Mammary epithelial cell (primary cell): ENCODE measurements at regions of chr2 and their contacts with region 1.

Region 1: GRCh38 chr2:218008060-218009040 is 5.6 kb upstream of the TNS1 start:
- DNase-seq: no peak
- H3K4me3 ChIP-seq: no peak overlapping the region
- H3K27ac ChIP-seq: no peak overlapping the region
- H3K4me1 ChIP-seq: peaks cover 11% of the 10 kb centered on the region
- H3K27me3 ChIP-seq: peaks cover 19% of the 10 kb centered on the region
- CTCF ChIP-seq: no peak

Region 2: GRCh38 chr2:217851191-217852020 is 156.9 kb before region 1 on chr2:
- CTCF ChIA-PET with region 1: no interaction called
- dilution Hi-C with region 1: no loop called
- in situ Hi-C with region 1: no loop called
- intact Hi-C with region 1: no loop called
- DNase-seq: peak; percentile 21
- H3K4me3 ChIP-seq: no peak overlapping the region
- H3K27ac ChIP-seq: no peak overlapping the region
- H3K4me1 ChIP-seq: peaks cover 26% of the 10 kb centered on the region
- H3K27me3 ChIP-seq: no peaks in the 10 kb centered on the region
- CTCF ChIP-seq: no peak

Region 3: GRCh38 chr2:218026676-218027425 is 18.5 kb after region 1 on chr2:
- CTCF ChIA-PET with region 1: no interaction called
- dilution Hi-C with region 1: no loop called
- in situ Hi-C with region 1: no loop called
- intact Hi-C with region 1: loop called (anchors 2 kb)
- DNase-seq: no peak
- H3K4me3 ChIP-seq: no peak overlapping the region
- H3K27ac ChIP-seq: no peak overlapping the region
- H3K4me1 ChIP-seq: peaks cover 5% of the 10 kb centered on the region
- H3K27me3 ChIP-seq: no peaks in the 10 kb centered on the region
- CTCF ChIP-seq: no peak

Region 4: GRCh38 chr2:218093879-218094278 is 85.5 kb after region 1 on chr2:
- CTCF ChIA-PET with region 1: no interaction called
- dilution Hi-C with region 1: no loop called
- in situ Hi-C with region 1: no loop called
- intact Hi-C with region 1: no loop called
- DNase-seq: no peak
- H3K4me3 ChIP-seq: no peak overlapping the region
- H3K27ac ChIP-seq: no peak overlapping the region
- H3K4me1 ChIP-seq: no peaks in the 10 kb centered on the region
- H3K27me3 ChIP-seq: peaks cover 7% of the 10 kb centered on the region
- CTCF ChIP-seq: peak in 1 of 2 donors; percentile 45